ENCODE measurements at regions of chr2 and their contacts with region 1.

Region 1: GRCh38 chr2:96509114-96509846 is 4.1 kb upstream of the NEURL3 start:
- DNase-seq: peak; percentile 95
- H3K4me3 ChIP-seq: no peak overlapping the region
- H3K27ac ChIP-seq: no peak overlapping the region
- H3K4me1 ChIP-seq: no peaks in the 10 kb centered on the region
- H3K27me3 ChIP-seq: no peaks in the 10 kb centered on the region

Region 2: DNA sequence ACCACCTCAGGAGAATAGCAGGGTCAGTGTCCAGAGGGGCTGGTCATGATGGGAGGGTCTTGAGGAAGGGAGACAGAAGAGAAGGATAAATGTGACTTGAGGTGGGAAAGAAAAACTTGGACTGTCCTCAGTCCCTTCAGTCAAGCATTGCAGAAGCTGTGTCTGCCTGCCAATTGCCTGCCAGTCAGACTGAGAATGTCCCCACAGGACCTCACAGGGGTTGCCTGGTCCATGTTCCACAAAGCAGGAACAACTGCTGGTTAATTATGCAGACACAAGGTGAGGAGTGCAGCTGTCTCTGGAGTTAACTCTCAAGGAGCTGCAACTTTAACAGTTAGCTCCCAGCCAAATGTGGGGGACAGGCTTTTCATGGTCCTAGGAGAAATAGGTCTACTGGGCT is 841.8 kb before region 1 on chr2:
- in situ Hi-C with region 1: no loop called
- DNase-seq: no peak
- H3K4me3 ChIP-seq: no peak overlapping the region
- H3K27ac ChIP-seq: no peak overlapping the region
- H3K4me1 ChIP-seq: peaks cover 25% of the 10 kb centered on the region
- H3K27me3 ChIP-seq: no peaks in the 10 kb centered on the region

Region 3: GRCh38 chr2:96024336-96025193 is 484.7 kb before region 1 on chr2:
- in situ Hi-C with region 1: loop called (anchors 25 kb)
- DNase-seq: no peak
- H3K4me3 ChIP-seq: no peak overlapping the region
- H3K27ac ChIP-seq: no peak overlapping the region
- H3K4me1 ChIP-seq: no peaks in the 10 kb centered on the region
- H3K27me3 ChIP-seq: no peaks in the 10 kb centered on the region

Region 4: DNA sequence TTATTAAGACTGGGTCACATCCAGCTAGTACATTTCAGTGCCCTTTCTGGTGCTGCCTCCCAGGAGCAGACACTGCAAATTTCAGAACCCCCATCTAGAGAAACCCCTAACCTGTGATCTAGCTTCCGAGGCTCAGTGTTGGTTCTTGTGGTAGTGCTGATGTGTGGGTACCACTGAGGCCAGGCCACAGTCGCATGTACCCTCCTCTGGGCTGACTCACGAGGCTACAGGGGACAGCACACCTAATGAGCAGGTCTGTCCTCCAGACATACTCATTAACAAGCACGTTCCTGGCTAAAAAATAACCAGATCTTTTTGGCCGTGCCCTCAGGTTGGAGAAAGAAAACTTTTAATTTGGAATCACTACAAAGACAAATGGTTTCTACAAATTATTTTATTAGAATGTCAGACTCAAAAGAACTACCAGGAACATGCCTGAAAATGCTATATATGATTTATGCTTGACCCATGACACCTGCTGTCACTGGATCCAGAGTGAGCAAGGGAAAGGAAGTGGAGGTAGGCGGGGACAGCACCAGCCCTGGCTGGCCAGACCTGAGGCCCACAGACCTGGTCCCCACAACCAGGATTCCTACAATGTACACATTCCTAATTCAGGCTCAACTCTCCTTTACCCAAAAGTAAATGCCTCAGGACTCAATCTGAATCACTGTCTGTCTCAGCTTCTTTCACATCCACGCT is 234.8 kb before region 1 on chr2:
- in situ Hi-C with region 1: loop called (anchors 25 kb)
- DNase-seq: no peak
- H3K4me3 ChIP-seq: no peak overlapping the region
- H3K27ac ChIP-seq: peak overlapping the region; percentile 44
- H3K4me1 ChIP-seq: peaks cover 12% of the 10 kb centered on the region
- H3K27me3 ChIP-seq: no peaks in the 10 kb centered on the region

Region 5: DNA sequence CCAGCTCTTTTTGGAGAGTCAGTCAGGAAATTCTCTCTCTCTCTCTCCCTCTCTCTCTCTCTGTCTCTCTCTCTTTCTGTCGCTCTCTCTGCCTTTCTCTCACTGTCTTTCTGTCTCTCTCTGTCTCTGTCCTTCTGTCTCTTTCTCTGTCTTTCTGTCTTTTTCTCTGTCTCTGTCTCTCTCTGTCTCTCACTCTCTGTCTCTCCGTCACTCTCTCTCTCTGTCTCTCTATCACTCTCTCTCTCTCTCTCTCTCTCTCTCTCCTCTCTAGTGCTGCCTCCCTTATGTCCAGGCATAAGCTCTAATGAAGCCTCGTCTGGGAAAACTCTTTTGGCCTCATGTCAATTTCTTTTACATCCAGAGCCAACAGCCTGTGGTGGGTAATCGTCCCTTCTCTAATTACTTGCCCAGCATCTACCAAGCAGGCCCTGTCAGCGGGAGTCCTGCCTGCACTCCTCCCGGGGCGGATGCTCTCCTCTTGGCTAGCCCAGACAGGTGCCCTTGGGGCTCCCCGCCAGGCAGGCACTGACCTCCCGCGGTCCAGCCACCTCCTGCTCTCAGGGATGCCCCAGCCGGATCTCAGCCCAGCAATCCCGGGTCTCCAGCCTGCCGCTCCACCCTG is 99.6 kb before region 1 on chr2:
- in situ Hi-C with region 1: loop called (anchors 5 kb)
- DNase-seq: no peak
- H3K4me3 ChIP-seq: no peak overlapping the region
- H3K27ac ChIP-seq: no peak overlapping the region
- H3K4me1 ChIP-seq: no peaks in the 10 kb centered on the region
- H3K27me3 ChIP-seq: 0 out of 2 replicates have a peak, but pooled peaks cover 5% of the 10 kb centered on the region

Region 6: DNA sequence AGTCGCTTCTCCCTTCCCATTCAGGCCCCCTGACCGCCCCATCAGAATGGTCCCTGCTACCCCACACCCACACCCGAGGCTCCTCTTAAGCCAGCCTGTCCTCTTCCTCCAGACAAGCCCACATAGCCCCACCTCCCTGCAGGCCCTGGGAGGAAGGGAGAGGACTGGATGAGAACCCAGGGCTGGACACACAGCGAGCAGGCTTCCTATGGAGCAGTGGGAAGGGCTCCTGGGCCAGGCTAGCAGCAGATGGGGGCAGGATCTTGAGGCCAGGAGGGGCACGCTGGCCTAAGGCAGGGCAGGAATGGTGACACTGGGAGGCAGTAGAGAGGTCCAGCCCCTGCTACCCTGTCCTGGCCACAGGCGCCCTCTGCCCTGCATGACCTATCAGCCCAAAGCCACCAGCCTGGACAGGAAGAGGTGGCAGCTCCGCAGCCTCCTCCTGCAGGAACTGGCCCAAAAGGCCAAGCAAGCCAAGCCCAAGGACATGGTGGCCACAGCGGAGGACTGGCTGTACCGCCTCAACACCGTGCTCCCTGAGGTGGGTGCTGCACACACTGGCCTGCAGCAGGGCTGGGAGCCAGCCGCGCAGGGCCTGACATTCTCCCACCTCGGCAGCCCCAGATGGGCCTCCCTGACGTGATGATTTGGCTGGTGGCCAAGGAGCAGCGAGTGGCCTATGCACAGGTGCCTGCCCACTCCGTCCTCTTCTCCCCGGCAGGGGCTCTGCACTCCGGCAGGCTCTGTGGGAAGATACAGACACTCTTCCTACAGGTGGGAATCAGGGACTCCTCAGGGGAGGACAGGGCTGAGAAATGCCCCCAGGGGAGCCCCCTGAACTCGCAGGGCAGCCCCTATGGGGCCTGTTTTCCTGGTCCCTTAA is 176.5 kb after region 1 on chr2:
- in situ Hi-C with region 1: no loop called
- DNase-seq: no peak
- H3K4me3 ChIP-seq: no peak overlapping the region
- H3K27ac ChIP-seq: no peak overlapping the region
- H3K4me1 ChIP-seq: no peaks in the 10 kb centered on the region
- H3K27me3 ChIP-seq: no peaks in the 10 kb centered on the region

Measured in GM23248 (cell line).